ENCODE measurements at regions of chr3 and their contacts with region 1.

Region 1: GRCh38 chr3:78659386-78659987 is 1108.3 kb downstream of the ROBO1 start:
- DNase-seq: peak; percentile 57
- ATAC-seq: no peak
- H3K4me3 ChIP-seq: no peak overlapping the region
- H3K27ac ChIP-seq: no peak overlapping the region
- H3K4me1 ChIP-seq: no peaks in the 10 kb centered on the region
- H3K27me3 ChIP-seq: no peaks in the 10 kb centered on the region
- CTCF ChIP-seq: peak; percentile 71
- POLR2A ChIP-seq: no peak
- RAD21 ChIP-seq: peak; percentile 77

Region 2: DNA sequence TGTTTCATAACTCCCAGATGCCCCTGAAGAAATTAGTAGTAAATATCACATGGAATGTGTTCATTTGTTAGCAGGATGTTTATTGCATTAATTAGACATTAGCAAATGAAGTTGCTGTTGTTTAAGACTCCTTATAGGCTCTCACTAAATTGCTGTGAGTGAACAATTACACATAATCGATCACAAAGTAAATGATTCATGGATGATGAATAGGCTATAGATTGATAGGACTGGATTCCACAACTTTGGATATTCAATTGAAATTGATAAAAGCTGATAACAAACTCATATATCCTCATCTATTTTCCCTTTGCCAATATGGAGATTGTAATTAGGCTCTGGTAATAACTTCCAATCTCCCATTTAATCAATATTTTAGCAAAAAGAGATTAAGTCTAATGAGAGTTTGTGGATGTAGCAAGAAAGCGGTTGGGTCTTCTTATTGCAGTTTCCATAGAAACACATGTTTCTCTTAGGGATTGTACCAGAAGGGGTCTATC is 1064.1 kb before region 1 on chr3:
- CTCF ChIA-PET with region 1: no interaction called
- POLR2A ChIA-PET with region 1: no interaction called
- dilution Hi-C with region 1: no loop called
- in situ Hi-C with region 1: no loop called
- intact Hi-C with region 1: no loop called
- DNase-seq: no peak
- ATAC-seq: no peak
- H3K4me3 ChIP-seq: no peak overlapping the region
- H3K27ac ChIP-seq: no peak overlapping the region
- H3K4me1 ChIP-seq: no peaks in the 10 kb centered on the region
- H3K27me3 ChIP-seq: no peaks in the 10 kb centered on the region
- CTCF ChIP-seq: no peak
- POLR2A ChIP-seq: no peak
- RAD21 ChIP-seq: no peak

Region 3: DNA sequence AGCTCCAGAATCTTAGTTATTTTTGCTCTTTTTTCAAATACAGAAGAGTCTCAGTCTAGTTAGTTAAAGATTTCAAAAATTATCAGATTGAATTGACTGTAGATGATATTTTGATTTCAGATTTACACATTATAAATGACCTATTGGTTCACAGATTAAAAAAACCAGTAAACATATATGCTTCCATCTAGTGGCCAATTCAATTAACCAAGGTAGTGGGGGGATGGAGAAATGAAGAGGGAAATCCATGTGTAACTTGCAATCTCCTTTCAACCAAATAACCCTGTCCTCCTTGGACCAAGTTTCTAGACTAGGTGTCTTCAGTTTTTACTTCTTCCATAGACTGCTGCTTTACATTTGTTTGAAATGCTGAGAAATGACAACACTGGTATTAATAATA is 318.6 kb after region 1 on chr3:
- CTCF ChIA-PET with region 1: no interaction called
- POLR2A ChIA-PET with region 1: no interaction called
- dilution Hi-C with region 1: no loop called
- in situ Hi-C with region 1: loop called (anchors 25 kb)
- intact Hi-C with region 1: loop called (anchors 2 kb)
- DNase-seq: peak; percentile 28
- ATAC-seq: peak; percentile 29; the same call in 1 of the 2 replicates
- H3K4me3 ChIP-seq: no peak overlapping the region
- H3K27ac ChIP-seq: no peak overlapping the region
- H3K4me1 ChIP-seq: no peaks in the 10 kb centered on the region
- H3K27me3 ChIP-seq: no peaks in the 10 kb centered on the region
- CTCF ChIP-seq: peak; percentile 53
- POLR2A ChIP-seq: no peak
- RAD21 ChIP-seq: peak; percentile 54

Region 4: DNA sequence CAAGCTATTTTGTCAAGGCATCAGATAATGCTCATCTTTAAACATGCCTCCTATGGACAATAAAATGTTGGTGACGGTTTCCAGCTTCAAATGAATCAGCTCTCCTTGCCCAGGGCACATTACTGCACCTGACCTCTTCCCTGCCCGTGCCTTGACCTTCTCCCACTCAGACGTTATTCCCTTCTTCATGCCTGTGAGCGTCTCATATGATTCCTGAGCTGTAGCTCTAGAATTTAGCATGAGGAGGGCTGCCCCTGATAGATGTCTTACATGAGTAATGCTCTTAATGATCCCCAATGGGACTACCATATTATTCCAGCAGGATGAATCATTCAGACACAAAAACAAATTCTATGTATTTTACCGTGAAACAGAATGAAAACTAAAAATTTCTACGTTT is 345.6 kb after region 1 on chr3:
- CTCF ChIA-PET with region 1: no interaction called
- POLR2A ChIA-PET with region 1: no interaction called
- dilution Hi-C with region 1: no loop called
- in situ Hi-C with region 1: no loop called
- intact Hi-C with region 1: no loop called
- DNase-seq: no peak
- ATAC-seq: no peak
- H3K4me3 ChIP-seq: no peak overlapping the region
- H3K27ac ChIP-seq: no peak overlapping the region
- H3K4me1 ChIP-seq: no peaks in the 10 kb centered on the region
- H3K27me3 ChIP-seq: no peaks in the 10 kb centered on the region
- CTCF ChIP-seq: no peak
- POLR2A ChIP-seq: no peak
- RAD21 ChIP-seq: no peak

Region 5: DNA sequence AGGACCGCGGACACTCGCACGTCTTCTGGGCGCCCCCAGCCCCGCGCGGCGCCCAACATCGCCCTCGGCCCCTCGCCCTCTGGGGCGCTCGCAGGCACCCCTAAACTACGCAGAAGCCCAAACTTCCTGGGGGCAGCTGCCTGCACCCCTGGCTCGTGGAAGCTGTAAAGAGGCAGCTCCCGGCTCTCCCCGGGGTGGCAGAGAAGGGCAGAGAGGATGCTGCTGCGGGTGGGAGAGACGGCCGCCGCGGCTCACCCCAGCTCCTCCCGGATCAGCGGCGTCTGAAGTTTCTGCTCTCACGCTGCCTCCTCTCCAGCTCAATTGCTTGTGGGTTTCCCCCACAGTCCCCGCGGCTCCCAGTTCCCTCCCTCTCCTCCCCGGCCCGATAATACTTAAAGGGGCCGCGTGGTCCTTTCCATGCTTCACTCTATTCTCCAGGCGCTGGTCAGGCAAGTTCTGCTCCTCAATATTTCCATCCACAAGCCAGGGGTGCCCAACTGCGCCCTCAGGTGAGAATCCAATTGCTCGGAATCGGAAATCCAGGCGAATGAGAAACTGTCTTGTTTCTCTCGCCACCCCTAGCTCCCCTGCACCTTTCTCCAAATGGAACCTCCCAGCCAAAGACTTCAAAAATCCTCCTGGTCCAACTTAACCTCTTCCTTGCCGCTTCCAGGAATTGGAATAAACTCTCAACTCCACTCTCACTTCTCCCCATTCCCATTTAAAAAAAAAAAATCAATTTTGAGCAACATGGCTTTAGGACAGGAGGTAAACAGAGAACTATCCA is 359.8 kb after region 1 on chr3:
- CTCF ChIA-PET with region 1: interaction called, 4 read pairs
- POLR2A ChIA-PET with region 1: no interaction called
- dilution Hi-C with region 1: no loop called
- in situ Hi-C with region 1: no loop called
- intact Hi-C with region 1: loop called (anchors 1 kb)
- DNase-seq: peak; percentile 93
- ATAC-seq: peak; percentile 83
- H3K4me3 ChIP-seq: peak overlapping the region; percentile 65
- H3K27ac ChIP-seq: peak overlapping the region; percentile 97
- H3K4me1 ChIP-seq: peaks cover 1% of the 10 kb centered on the region; the same call in 1 of the 2 replicates
- H3K27me3 ChIP-seq: no peaks in the 10 kb centered on the region
- CTCF ChIP-seq: no peak
- POLR2A ChIP-seq: peak; percentile 94
- RAD21 ChIP-seq: 0 out of 2 replicates have a peak, but pooled peaks have one; percentile 10

Region 6: DNA sequence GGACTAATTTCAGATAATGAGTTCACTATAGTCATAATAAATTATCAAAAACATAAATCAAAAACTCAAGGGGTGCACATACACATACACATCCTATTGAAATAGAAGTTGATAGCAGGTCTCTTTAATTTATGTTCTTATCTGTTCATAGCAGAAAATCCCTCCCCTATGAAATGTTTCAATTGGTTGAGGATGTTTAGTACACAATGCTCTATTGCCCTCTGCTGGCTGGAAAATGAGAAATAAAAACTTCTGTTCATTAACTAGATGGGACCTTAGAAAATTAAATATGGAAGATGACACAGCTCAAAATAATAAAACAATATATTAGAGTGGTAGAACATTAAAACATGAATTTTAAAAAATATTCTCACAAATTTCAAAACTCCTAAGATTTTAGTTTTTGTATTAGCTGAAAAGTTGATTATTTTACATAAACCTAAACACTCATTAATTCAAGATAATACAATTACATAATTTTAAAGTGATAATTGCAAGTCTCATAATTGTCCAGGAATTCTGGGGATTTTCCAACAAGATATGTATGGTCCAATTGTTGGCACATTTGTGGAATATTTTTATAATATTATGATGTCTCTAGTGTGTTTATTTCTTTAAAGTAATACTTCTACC is 373.3 kb after region 1 on chr3:
- CTCF ChIA-PET with region 1: interaction called, 4 read pairs
- POLR2A ChIA-PET with region 1: no interaction called
- dilution Hi-C with region 1: no loop called
- in situ Hi-C with region 1: loop called (anchors 5 kb)
- intact Hi-C with region 1: loop called (anchors 1 kb)
- DNase-seq: peak; percentile 67
- ATAC-seq: peak; percentile 52; the same call in 1 of the 2 replicates
- H3K4me3 ChIP-seq: no peak overlapping the region
- H3K27ac ChIP-seq: no peak overlapping the region
- H3K4me1 ChIP-seq: peaks cover 2% of the 10 kb centered on the region; the same call in 1 of the 2 replicates
- H3K27me3 ChIP-seq: no peaks in the 10 kb centered on the region
- CTCF ChIP-seq: peak; percentile 69
- POLR2A ChIP-seq: no peak
- RAD21 ChIP-seq: peak; percentile 79

Region 7: DNA sequence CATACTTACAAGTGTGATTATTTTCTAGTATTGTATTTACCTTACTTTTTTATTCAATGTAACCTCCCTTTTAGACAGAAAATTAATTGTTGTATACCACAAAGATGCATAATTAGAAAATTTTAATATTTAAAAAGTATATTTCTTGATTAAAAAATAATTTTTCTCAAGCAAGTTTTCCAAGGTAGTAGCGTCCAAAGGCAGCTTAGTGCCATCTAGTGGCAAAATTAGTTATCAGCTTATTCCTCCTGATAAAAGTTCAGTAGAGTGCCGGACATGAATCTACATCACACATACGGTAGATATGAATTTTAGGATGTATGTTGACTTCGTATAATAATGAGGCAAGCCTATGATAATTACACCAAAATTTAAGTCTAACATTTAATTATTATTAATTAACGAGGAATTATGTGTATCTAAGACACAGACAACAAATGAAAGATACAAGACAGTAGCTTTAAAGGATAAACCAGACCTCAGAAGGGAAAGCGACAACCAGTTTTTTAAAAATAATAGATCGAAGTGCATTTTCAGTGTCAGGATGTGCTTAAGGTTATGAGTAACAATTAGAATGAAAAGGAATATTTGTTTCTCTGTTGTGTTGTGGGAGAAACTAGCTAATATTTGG is 702.4 kb after region 1 on chr3:
- CTCF ChIA-PET with region 1: interaction called, 4 read pairs
- POLR2A ChIA-PET with region 1: no interaction called
- dilution Hi-C with region 1: no loop called
- in situ Hi-C with region 1: loop called (anchors 10 kb)
- intact Hi-C with region 1: loop called (anchors 2 kb)
- DNase-seq: peak; percentile 58
- ATAC-seq: peak; percentile 73
- H3K4me3 ChIP-seq: no peak overlapping the region
- H3K27ac ChIP-seq: no peak overlapping the region
- H3K4me1 ChIP-seq: 0 out of 2 replicates have a peak, but pooled peaks cover 3% of the 10 kb centered on the region
- H3K27me3 ChIP-seq: no peaks in the 10 kb centered on the region
- CTCF ChIP-seq: peak; percentile 85
- POLR2A ChIP-seq: 0 out of 2 replicates have a peak, but pooled peaks have one; percentile 30
- RAD21 ChIP-seq: peak; percentile 89